Head of caudate nucleus (tissue), 42 donors: ENCODE measurements at regions of chrX and their contacts with region 1.

Region 1: GRCh38 chrX:48957827-48958634 is 624 bp upstream of the OTUD5 start:
- DNase-seq: peak; percentile 89 to 98 (median 96)

Region 2: DNA sequence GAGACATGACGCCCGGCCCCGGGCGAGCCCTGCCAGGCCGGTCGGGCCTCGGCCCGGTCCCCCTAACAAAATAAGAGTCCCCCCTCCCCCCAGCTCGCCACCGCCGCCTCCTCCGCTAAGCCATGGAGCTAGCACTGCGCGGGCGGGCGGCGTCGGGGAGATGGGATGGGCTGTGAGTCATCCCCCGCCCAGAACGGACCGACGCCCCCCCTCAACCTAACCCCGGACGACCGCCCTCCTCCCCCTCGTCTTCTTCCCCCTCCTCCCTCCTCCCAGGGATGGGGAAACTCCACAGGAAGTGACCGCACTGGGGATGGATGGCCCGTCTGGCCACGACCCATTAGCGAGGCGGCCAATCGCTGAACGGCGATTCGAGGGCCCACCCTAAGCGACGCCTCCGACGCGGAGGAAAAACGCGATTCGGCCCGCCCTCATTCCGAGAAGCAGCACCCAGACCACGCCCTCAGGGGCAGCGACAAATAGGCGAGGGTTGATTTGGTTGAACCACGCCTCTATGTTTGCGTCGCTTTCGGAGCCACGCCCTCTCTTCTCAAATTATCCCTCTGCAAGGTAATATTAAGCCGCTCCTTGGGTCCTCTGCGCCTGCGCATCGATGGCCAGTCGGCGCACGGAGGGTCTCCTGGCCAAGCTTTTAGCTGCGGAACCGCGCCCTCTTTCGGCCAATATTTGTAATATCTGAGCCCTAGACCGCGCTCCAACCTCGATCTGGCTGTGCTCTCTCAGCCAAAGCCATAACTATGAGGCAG is 85.4 kb after region 1 on chrX and contains the start of gene TFE3:
- intact Hi-C with region 1: loop called (anchors 5 kb)
- DNase-seq: peak; percentile 88 to 98 (median 96)